ENCODE measurements at regions of chr18 and their contacts with region 1.

Region 1: GRCh38 chr18:68733707-68734106 is 18.8 kb upstream of the TMX3 start:
- DNase-seq: no peak

Region 2: GRCh38 chr18:68822926-68823325 is 89.2 kb after region 1 on chr18:
- intact Hi-C with region 1: loop called in 1 of 2 experiments (anchors 2 kb)
- DNase-seq: no peak

Measured in posterior vena cava (tissue), 2 donors.